ENCODE measurements at regions of chr3 and their contacts with region 1.

Region 1: GRCh38 chr3:149221783-149222517 is at the start of gene CP:
- DNase-seq: no peak
- ATAC-seq: no peak
- H3K4me3 ChIP-seq: peak within 1 kb of the TSS; percentile 1
- H3K27ac ChIP-seq: no peak within 1 kb of the TSS
- H3K4me1 ChIP-seq: peaks cover 4% of the 10 kb centered on the region
- H3K27me3 ChIP-seq: no peaks in the 10 kb centered on the region
- CTCF ChIP-seq: no peak
- total RNA-seq, gene CP: 1.0 to 3.5 (median 1.8) TPM

Region 2: DNA sequence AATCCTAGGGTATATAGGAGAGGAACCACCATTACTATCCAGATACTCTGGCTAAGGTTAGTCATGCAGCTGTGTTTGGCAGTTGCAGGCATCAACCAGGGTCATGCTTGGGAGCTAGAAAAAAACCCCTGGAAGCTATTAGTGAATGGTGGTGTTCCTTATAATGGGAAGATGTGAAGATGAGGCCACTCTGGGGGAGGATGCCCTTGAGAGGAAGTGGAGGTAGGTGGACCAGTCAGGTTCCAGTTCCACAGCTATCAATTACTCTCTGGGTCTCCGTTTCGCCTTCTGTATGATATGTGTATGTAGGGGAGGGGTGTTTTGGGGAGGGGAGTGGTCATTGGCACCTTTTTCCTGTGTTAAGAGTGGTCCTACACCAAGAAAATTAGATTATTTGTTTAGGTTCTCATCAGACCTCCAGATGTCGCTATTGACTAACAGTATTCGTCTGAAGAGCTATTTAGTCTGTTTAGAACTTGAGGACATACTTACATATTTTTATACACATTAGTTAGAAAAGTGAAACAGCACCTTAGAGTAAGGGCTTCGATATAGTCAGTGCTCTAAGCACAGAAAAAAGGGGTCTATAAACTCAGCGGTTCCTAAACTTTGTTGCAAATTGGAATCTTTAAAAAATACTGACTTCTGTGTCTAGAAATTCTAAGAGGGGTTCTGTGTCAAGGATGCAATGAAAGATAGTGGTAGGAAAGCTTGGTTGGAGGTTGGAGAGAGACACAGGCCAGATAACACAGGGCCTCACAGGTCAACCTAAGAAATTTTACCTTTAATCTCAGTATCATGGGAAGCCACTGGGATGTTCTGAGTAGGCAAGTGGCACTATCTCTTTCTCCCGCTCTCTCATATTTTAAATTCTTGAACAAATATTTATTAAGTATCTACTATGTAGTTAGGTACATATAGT is 101.6 kb before region 1 on chr3:
- intact Hi-C with region 1: no loop called
- DNase-seq: no peak
- ATAC-seq: peak; percentile 62 to 91 (median 72)
- H3K4me3 ChIP-seq: no peak overlapping the region
- H3K27ac ChIP-seq: no peak overlapping the region
- H3K4me1 ChIP-seq: no peaks in the 10 kb centered on the region
- H3K27me3 ChIP-seq: no peaks in the 10 kb centered on the region
- CTCF ChIP-seq: peak; percentile 65

Region 3: DNA sequence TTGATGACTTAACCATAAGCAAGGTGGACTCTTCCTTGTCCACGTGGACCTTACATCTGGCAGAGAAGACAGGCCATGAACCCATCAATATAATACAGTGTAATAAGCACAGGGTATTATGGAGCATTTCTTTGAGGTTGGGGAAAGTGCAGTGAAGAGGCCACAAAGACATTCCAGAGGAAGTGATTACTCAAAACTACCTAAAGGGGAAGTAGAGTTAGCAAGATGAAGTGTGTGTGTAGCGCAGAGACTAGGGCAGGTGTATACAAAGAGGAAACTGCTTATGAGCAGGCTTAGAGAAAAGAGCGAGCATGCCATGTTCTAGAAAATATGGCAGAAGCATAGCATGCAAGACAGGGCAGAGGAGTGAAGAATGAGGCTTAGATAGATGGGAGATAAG is 18.2 kb before region 1 on chr3:
- intact Hi-C with region 1: loop called in 1 of 2 experiments (anchors 2 kb)
- DNase-seq: no peak
- ATAC-seq: no peak
- H3K4me3 ChIP-seq: no peak overlapping the region
- H3K27ac ChIP-seq: no peak overlapping the region
- H3K4me1 ChIP-seq: no peaks in the 10 kb centered on the region
- H3K27me3 ChIP-seq: no peaks in the 10 kb centered on the region
- CTCF ChIP-seq: no peak